GM10248 (cell line): ENCODE measurements at regions of chr1 and their contacts with region 1.

Region 1: DNA sequence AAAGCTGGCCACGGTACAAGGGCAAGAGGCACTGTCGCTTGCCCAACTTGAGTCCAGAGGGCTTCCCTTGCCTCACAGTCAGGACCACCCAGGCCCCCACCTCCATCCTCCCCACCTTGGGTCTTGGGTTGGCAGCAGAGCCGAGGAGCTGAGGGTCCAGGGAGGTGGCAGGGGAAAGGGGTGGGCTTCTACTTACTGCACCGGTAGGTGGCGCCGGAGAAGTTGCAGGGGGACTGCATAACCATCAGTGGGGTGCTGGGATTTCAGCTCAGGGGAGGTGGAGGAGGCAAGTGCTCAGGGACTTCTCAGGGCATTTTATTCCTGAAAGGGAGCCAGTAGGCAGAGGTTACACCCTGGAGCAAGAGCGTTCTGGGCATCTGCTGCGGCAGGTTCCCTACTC is 44.0 kb downstream of the TRIM62 start:
- DNase-seq: no peak
- CTCF ChIP-seq: peak; percentile 43

Region 2: GRCh38 chr1:32538887-32539583 is 598.8 kb before region 1 on chr1 and contains the start of gene ZBTB8A:
- CTCF ChIA-PET with region 1: no interaction called
- POLR2A ChIA-PET with region 1: no interaction called
- DNase-seq: peak; percentile 37
- CTCF ChIP-seq: no peak

Region 3: GRCh38 chr1:33127001-33127791 is 10.6 kb before region 1 on chr1:
- CTCF ChIA-PET with region 1: interaction called, 16 read pairs
- POLR2A ChIA-PET with region 1: interaction called, 3 read pairs
- DNase-seq: peak; percentile 94
- CTCF ChIP-seq: peak; percentile 97